ENCODE measurements at regions of chr16 and their contacts with region 1.

Region 1: GRCh38 chr16:24729362-24729984 is at the start of gene TNRC6A:
- DNase-seq: peak; percentile 43 to 86 (median 64)
- ATAC-seq: peak; percentile 75 to 85 (median 78)
- H3K4me3 ChIP-seq: peak within 1 kb of the TSS; percentile 81 to 90
- H3K4me3 Mint-ChIP-seq: peak within 1 kb of the TSS; percentile 91 to 97 (median 95)
- H3K27ac ChIP-seq: peak within 1 kb of the TSS; percentile 98
- H3K27ac Mint-ChIP-seq: peak within 1 kb of the TSS; percentile 96 to 97
- H3K4me1 ChIP-seq: peaks cover 12 to 17% of the 10 kb centered on the region in 2 experiments
- H3K4me1 Mint-ChIP-seq: peaks cover 44 to 54% (median 53%) of the 10 kb centered on the region in 3 donors
- H3K27me3 ChIP-seq: no peaks in the 10 kb centered on the region
- H3K27me3 Mint-ChIP-seq: no peaks in the 10 kb centered on the region
- total RNA-seq, gene TNRC6A: 74.7 to 79.4 (median 77.9) TPM

Region 2: GRCh38 chr16:24683847-24684493 is 45.5 kb before region 1 on chr16:
- CTCF ChIA-PET with region 1: no interaction called
- POLR2A ChIA-PET with region 1: interaction called in 1 of 2 experiments, 11 read pairs
- DNase-seq: no peak
- ATAC-seq: no peak
- H3K4me3 ChIP-seq: no peak overlapping the region
- H3K4me3 Mint-ChIP-seq: no peak overlapping the region
- H3K27ac ChIP-seq: no peak overlapping the region
- H3K27ac Mint-ChIP-seq: no peak overlapping the region
- H3K4me1 ChIP-seq: no peaks in the 10 kb centered on the region
- H3K4me1 Mint-ChIP-seq: peaks cover 2 to 5% (median 3%) of the 10 kb centered on the region in 3 donors
- H3K27me3 ChIP-seq: peaks cover 0 to 6% of the 10 kb centered on the region in 2 experiments
- H3K27me3 Mint-ChIP-seq: peaks cover 4 to 8% of the 10 kb centered on the region in 2 donors